Naive thymus-derived CD4-positive, alpha-beta T cell (primary cell): ENCODE measurements at regions of chr19 and their contacts with region 1.

Region 1: DNA sequence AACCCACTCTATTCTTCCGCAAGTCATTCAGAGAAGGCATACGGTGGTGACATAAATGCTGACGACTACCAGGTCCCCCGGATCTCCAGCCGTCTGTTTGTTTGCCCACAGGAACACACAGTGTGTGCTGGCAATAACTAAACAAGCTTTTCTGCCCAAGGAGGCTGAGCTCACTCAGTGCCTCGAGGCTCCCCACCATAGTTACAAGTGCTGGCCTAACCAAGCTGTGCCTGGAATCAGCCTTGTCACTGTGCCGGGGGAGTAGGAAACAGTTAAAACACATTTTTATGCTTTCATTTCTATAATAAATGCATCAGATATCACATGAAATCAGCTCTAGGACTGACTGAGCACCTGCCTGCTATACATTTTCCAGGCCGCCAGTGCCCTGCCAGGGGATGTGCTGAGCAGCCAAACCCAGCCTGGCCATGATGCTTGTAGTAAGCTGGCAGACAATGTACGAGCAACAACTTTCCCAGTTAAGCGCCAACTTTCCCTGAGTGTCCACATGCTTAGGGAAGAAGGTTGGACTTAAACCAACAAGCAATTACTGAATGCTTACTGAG is 28.1 kb downstream of the BRD4 start:
- DNase-seq: no peak
- ATAC-seq: peak; percentile 30
- H3K4me3 ChIP-seq: peak overlapping the region; percentile 34
- H3K4me3 Mint-ChIP-seq: peak overlapping the region in 9 of 10 donors; percentile 42 to 83 (median 71)
- H3K27ac ChIP-seq: peak overlapping the region; percentile 42
- H3K27ac Mint-ChIP-seq: peak overlapping the region; percentile 6 to 89 (median 78)
- H3K4me1 ChIP-seq: peaks cover 55 to 75% of the 10 kb centered on the region in 2 donors
- H3K4me1 Mint-ChIP-seq: peaks cover 65 to 90% (median 76%) of the 10 kb centered on the region in 7 donors
- H3K27me3 ChIP-seq: no peaks in the 10 kb centered on the region
- H3K27me3 Mint-ChIP-seq: no peaks in the 10 kb centered on the region

Region 2: DNA sequence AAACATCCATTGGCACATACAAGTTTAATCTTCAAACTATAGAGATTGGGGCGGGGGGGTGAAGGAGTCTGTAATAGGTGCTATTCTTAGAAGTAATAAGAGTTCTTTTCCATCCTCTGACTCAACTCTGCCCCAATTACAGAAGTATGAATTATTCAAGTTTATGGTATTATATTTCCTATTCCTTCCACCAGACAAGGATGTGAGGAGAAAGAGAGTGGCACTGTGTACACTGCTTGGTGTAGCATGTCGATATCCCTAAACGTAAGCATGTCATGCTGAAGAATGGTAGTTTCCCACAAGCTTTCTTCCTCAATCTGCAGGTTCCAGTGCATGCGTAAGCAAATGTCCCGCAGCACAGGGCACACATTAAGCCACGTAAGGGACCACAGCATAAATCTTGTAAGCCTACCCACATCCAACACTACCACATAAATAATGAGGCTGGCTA is 14.0 kb after region 1 on chr19:
- CTCF ChIA-PET with region 1: no interaction called
- POLR2A ChIA-PET with region 1: no interaction called
- intact Hi-C with region 1: loop called in 1 of 2 experiments (anchors 2 kb)
- DNase-seq: peak in 4 of 9 donors; percentile 28 to 46 (median 38)
- ATAC-seq: peak; percentile 84
- H3K4me3 ChIP-seq: no peak overlapping the region
- H3K4me3 Mint-ChIP-seq: peak overlapping the region in 9 of 10 donors; percentile 42 to 84 (median 72)
- H3K27ac ChIP-seq: peak overlapping the region; percentile 39
- H3K27ac Mint-ChIP-seq: peak overlapping the region; percentile 12 to 85 (median 75)
- H3K4me1 ChIP-seq: peaks cover 60 to 66% of the 10 kb centered on the region in 2 donors
- H3K4me1 Mint-ChIP-seq: peaks cover 72 to 95% (median 85%) of the 10 kb centered on the region in 7 donors
- H3K27me3 ChIP-seq: no peaks in the 10 kb centered on the region
- H3K27me3 Mint-ChIP-seq: no peaks in the 10 kb centered on the region